ENCODE measurements at regions of chr10 and their contacts with region 1.

Region 1: GRCh38 chr10:72126184-72126871 is 38.0 kb upstream of the SPOCK2 start:
- DNase-seq: no peak
- ATAC-seq: no peak
- H3K4me3 Mint-ChIP-seq: no peak overlapping the region
- H3K27ac Mint-ChIP-seq: no peak overlapping the region
- H3K4me1 Mint-ChIP-seq: peaks cover 25% of the 10 kb centered on the region
- H3K27me3 Mint-ChIP-seq: no peaks in the 10 kb centered on the region

Region 2: DNA sequence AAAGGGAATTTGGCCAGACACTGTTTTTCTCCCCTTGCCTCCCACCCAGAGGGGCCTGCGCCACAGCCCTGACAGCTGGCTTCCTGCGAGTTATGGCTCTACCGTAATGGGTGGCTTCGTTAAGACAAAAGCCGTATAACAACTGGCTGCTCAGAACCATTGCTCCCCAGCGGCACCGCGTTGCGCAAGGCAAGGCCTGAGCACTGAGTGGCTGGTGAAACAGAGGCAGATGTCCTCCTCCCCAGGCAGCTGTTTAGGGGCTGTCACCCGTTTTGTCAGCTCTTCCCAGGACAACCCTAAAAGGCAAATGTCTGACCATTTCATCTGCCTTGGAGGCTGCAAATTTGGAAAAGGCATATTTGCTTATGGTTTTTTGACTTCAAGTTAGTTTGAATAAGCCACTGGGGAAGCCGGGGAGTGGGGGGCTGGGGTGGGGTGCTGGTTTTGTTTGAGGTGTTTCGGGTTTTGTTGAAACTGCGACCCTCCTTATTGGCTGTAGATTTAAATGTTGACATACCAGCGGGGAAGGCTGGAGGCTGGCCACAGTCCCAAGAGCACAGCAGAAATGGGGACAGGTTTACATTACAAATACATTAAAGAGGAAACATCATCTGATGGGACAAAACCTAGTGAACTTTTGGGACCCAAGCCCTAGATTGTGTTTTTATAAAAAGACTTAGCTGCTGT is 37.3 kb before region 1 on chr10:
- CTCF ChIA-PET with region 1: interaction called, 10 read pairs
- POLR2A ChIA-PET with region 1: interaction called, 3 read pairs
- DNase-seq: peak; percentile 73
- ATAC-seq: peak; percentile 54
- H3K4me3 Mint-ChIP-seq: peak overlapping the region; percentile 97
- H3K27ac Mint-ChIP-seq: peak overlapping the region; percentile 99
- H3K4me1 Mint-ChIP-seq: peaks cover 56% of the 10 kb centered on the region
- H3K27me3 Mint-ChIP-seq: no peaks in the 10 kb centered on the region

Region 3: GRCh38 chr10:72107325-72108003 is 18.9 kb before region 1 on chr10:
- CTCF ChIA-PET with region 1: interaction called, 13 read pairs
- POLR2A ChIA-PET with region 1: no interaction called
- DNase-seq: peak; percentile 65
- ATAC-seq: peak; percentile 72
- H3K4me3 Mint-ChIP-seq: peak overlapping the region; percentile 77
- H3K27ac Mint-ChIP-seq: peak overlapping the region; percentile 92
- H3K4me1 Mint-ChIP-seq: peaks cover 61% of the 10 kb centered on the region
- H3K27me3 Mint-ChIP-seq: no peaks in the 10 kb centered on the region

Region 4: GRCh38 chr10:72114706-72115450 is 11.4 kb before region 1 on chr10:
- CTCF ChIA-PET with region 1: interaction called, 28 read pairs
- POLR2A ChIA-PET with region 1: no interaction called
- DNase-seq: no peak
- ATAC-seq: no peak
- H3K4me3 Mint-ChIP-seq: no peak overlapping the region
- H3K27ac Mint-ChIP-seq: no peak overlapping the region
- H3K4me1 Mint-ChIP-seq: peaks cover 4% of the 10 kb centered on the region
- H3K27me3 Mint-ChIP-seq: no peaks in the 10 kb centered on the region

Region 5: DNA sequence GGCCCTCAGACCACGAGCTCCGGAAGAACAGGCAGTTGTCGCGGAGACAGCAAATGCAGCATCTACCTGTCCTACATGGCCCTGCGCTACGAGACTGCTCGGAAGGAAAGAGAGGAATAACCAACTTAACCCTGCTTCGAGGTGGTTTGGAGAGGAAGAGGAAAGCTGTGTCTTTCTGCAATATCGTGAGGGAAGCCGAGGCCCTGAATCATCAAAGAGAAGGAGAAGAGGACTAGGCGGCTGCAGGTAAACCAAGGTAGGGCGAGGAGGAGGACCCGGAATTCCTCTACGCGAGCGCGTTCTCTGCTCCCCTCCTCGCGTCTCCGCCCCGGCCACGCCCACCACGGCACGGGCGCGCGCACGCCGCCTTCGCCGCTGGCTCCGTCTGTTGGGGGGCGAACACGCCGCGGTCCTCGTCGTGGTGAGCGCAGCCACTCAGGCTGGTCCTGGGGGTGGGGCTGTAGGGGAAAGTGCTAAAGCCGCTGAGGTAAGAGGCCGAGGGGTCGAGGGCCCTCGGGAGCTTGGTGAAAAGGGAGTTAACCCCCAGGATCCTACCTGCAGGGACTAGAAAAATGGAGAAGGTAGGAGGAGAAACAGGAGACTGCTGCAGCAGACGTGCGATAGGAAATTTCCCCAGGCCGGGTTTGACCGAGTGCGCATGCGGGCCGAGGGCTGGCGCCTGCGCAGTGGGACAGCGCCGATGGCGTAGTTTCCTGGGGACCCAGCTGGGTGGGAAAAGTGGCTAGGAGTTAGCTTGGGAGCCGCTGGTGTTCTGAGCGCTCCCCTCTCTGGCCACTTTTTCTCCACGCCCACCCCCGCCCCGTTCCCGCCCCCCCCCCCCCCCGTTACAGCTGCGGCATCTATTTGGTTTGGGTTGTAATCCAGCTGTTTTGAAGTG is 89.6 kb after region 1 on chr10 and contains the starts of genes ANAPC16 and ASCC1:
- CTCF ChIA-PET with region 1: interaction called, 22 read pairs
- POLR2A ChIA-PET with region 1: interaction called, 3 read pairs
- DNase-seq: peak; percentile 95
- ATAC-seq: peak; percentile 88
- H3K4me3 Mint-ChIP-seq: peak within 1 kb of the TSS; percentile 96
- H3K27ac Mint-ChIP-seq: peak within 1 kb of the TSS; percentile 96
- H3K4me1 Mint-ChIP-seq: peaks cover 52% of the 10 kb centered on the region
- H3K27me3 Mint-ChIP-seq: no peaks in the 10 kb centered on the region
- total RNA-seq, gene ANAPC16: 72.9 TPM
- total RNA-seq, gene ASCC1: 34.8 to 40.3 TPM

Region 6: DNA sequence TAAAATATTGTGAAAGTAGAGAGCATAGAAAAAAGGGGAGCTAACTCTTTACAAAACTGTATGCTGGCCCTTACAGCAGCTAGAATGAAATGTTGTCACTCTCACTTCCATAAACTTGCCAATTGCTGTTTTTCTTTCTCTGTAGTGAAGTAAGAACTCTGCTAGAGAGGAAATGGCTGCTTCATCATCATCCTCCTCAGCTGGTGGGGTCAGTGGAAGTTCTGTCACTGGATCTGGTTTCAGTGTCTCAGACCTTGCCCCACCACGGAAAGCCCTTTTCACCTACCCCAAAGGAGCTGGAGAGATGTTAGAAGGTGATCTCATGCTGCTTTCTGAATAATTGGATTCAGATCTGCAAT is 97.4 kb after region 1 on chr10:
- CTCF ChIA-PET with region 1: interaction called, 24 read pairs
- POLR2A ChIA-PET with region 1: interaction called, 3 read pairs
- DNase-seq: no peak
- ATAC-seq: peak; percentile 22
- H3K4me3 Mint-ChIP-seq: peak overlapping the region; percentile 24
- H3K27ac Mint-ChIP-seq: peak overlapping the region; percentile 65
- H3K4me1 Mint-ChIP-seq: peaks cover 51% of the 10 kb centered on the region
- H3K27me3 Mint-ChIP-seq: no peaks in the 10 kb centered on the region

Measured in activated CD8-positive, alpha-beta T cell treated with anti-CD3 and anti-CD28 coated beads, Interleukin-2, amount 10 ng/mL, durations not matched to agents 7 days and 5 days (primary cell).